ENCODE measurements at regions of chr4 and their contacts with region 1.

Region 1: DNA sequence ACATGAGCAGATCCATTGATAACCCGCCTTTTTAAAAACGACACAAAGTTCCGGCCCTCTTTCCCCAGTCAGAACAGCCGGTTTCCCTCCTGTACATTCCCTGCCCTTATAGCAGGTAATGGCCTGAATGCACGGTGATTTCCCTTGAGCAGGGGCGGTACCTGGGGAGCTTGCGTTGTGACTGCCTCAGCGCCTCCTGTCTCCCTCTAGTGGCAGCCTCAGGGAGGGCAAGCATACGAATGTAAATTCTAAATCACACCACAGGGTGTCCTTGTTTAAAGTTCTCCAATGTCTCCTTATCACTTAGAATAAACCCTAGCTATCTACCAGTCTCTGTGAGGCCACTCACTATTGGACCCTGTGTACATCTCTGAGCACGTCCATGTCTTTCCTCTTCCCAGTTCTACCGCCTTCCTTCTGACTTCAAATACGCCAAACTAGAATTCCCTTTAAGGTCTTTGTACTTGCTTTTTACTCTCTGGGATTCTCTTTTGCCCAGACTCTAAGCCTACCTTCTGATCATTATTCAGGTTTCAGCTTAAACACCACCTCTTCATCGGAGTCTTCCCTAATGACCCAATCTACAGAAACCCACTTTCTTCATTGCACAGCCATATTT is 18.4 kb upstream of the LDB2 start:
- DNase-seq: peak; percentile 39 to 83 (median 65)
- ATAC-seq: peak; percentile 95
- H3K4me3 ChIP-seq: no peak overlapping the region
- H3K4me3 Mint-ChIP-seq: no peak overlapping the region
- H3K27ac ChIP-seq: no peak overlapping the region
- H3K27ac Mint-ChIP-seq: no peak overlapping the region
- H3K4me1 ChIP-seq: no peaks in the 10 kb centered on the region
- H3K4me1 Mint-ChIP-seq: peaks cover 3% of the 10 kb centered on the region
- H3K27me3 ChIP-seq: no peaks in the 10 kb centered on the region
- H3K27me3 Mint-ChIP-seq: peaks cover 2% of the 10 kb centered on the region
- CTCF ChIP-seq: peak; percentile 80

Region 2: DNA sequence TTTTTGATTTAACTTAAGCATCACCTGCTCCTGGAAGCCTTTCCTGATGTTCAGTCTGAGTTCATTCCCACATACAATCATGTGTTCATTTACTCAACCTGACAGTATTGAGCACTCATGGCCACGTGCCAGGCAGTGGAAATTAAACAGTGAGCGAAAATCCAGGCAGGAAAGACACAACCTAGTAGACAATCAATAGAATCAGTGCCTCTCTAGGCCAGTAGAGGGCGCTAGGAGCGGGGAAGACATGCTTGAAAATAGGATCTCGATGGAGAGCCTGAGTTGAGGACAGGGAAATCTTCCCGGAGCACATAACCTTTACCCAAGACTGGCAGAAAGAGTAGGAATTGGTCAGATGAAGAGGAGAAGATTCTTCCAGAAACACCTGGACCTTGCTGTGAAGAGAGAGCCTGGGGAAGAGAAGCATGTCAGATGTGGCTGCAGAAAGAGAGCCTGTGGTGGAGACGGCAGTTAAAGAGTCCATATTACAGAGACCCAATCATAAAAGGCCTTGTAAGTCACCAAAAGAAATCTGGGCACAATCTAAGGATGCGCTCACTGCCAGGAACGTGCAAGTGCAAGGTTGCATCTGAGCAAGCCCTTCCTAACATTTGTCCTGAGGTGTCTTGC is 121.9 kb before region 1 on chr4:
- CTCF ChIA-PET with region 1: interaction called, 5 read pairs
- POLR2A ChIA-PET with region 1: no interaction called
- intact Hi-C with region 1: loop called in 1 of 2 experiments (anchors 1 kb)
- DNase-seq: peak in 5 of 9 experiments; percentile 2 to 52 (median 37)
- ATAC-seq: no peak
- H3K4me3 ChIP-seq: no peak overlapping the region
- H3K4me3 Mint-ChIP-seq: no peak overlapping the region
- H3K27ac ChIP-seq: no peak overlapping the region
- H3K27ac Mint-ChIP-seq: no peak overlapping the region
- H3K4me1 ChIP-seq: no peaks in the 10 kb centered on the region
- H3K4me1 Mint-ChIP-seq: peaks cover 1% of the 10 kb centered on the region
- H3K27me3 ChIP-seq: no peaks in the 10 kb centered on the region
- H3K27me3 Mint-ChIP-seq: no peaks in the 10 kb centered on the region
- CTCF ChIP-seq: peak; percentile 47

Region 3: DNA sequence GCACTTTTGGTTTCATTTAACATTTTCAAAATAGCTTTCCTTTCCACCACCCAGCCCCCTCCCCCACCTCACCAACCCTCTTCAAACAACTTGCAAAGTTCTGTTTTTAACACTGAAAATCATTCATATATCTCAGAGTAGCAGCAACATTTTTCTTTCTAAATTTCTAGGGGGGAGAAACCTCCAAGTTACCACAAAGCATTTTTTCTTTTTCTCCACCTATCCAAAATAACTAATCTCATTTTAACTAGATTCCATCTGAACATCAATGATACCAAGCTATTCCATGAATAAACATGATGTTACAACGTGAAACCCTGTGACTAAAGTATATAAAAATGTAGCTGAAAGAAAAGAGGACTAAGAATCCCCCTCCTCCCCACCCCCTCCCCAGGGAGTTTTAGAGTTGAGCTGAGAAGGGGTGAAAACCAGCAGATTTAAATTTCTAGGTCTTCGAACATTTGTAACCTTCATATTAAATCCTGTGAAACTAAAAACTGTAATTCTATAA is 23.6 kb before region 1 on chr4:
- CTCF ChIA-PET with region 1: interaction called, 10 read pairs
- POLR2A ChIA-PET with region 1: no interaction called
- intact Hi-C with region 1: no loop called
- DNase-seq: peak in 1 of 9 experiments; percentile 39
- ATAC-seq: no peak
- H3K4me3 ChIP-seq: peak overlapping the region in 1 of 2 experiments; percentile 9
- H3K4me3 Mint-ChIP-seq: peak overlapping the region; percentile 40
- H3K27ac ChIP-seq: peak overlapping the region in 1 of 2 experiments; percentile 33
- H3K27ac Mint-ChIP-seq: peak overlapping the region; percentile 55
- H3K4me1 ChIP-seq: peaks cover 40% of the 10 kb centered on the region
- H3K4me1 Mint-ChIP-seq: peaks cover 52% of the 10 kb centered on the region
- H3K27me3 ChIP-seq: no peaks in the 10 kb centered on the region
- H3K27me3 Mint-ChIP-seq: peaks cover 5% of the 10 kb centered on the region
- CTCF ChIP-seq: no peak

Region 4: GRCh38 chr4:16897991-16898827 is 18.6 kb before region 1 on chr4 and contains the start of gene LDB2:
- CTCF ChIA-PET with region 1: interaction called, 10 read pairs
- POLR2A ChIA-PET with region 1: no interaction called
- intact Hi-C with region 1: no loop called
- DNase-seq: peak in 1 of 9 experiments; percentile 20
- ATAC-seq: no peak
- H3K4me3 ChIP-seq: peak within 1 kb of the TSS in 1 of 2 experiments; percentile 16
- H3K4me3 Mint-ChIP-seq: no peak within 1 kb of the TSS
- H3K27ac ChIP-seq: no peak within 1 kb of the TSS
- H3K27ac Mint-ChIP-seq: no peak within 1 kb of the TSS
- H3K4me1 ChIP-seq: peaks cover 10% of the 10 kb centered on the region
- H3K4me1 Mint-ChIP-seq: peaks cover 16% of the 10 kb centered on the region
- H3K27me3 ChIP-seq: no peaks in the 10 kb centered on the region
- H3K27me3 Mint-ChIP-seq: peaks cover 8% of the 10 kb centered on the region
- CTCF ChIP-seq: no peak
- total RNA-seq, gene LDB2: not detected

Region 5: GRCh38 chr4:17324386-17324830 is 407.6 kb after region 1 on chr4:
- CTCF ChIA-PET with region 1: no interaction called
- POLR2A ChIA-PET with region 1: no interaction called
- intact Hi-C with region 1: loop called in 1 of 2 experiments (anchors 5 kb)
- DNase-seq: peak in 8 of 9 experiments; percentile 30 to 66 (median 55)
- ATAC-seq: peak; percentile 66
- H3K4me3 ChIP-seq: no peak overlapping the region
- H3K4me3 Mint-ChIP-seq: peak overlapping the region; percentile 56
- H3K27ac ChIP-seq: no peak overlapping the region
- H3K27ac Mint-ChIP-seq: no peak overlapping the region
- H3K4me1 ChIP-seq: peaks cover 4% of the 10 kb centered on the region
- H3K4me1 Mint-ChIP-seq: peaks cover 11% of the 10 kb centered on the region
- H3K27me3 ChIP-seq: no peaks in the 10 kb centered on the region
- H3K27me3 Mint-ChIP-seq: no peaks in the 10 kb centered on the region
- CTCF ChIP-seq: peak; percentile 61

Measured in CD8-positive, alpha-beta T cell (primary cell).